ENCODE measurements at regions of chr2 and their contacts with region 1.

Region 1: GRCh38 chr2:205766779-205767359 is 84.6 kb downstream of the NRP2 start:
- DNase-seq: peak in 4 of 5 donors; percentile 35 to 60 (median 48)
- ATAC-seq: peak in 1 of 4 donors; percentile 49
- H3K4me3 ChIP-seq: no peak overlapping the region
- H3K27ac ChIP-seq: peak overlapping the region in 2 of 12 donors; percentile 58 to 85
- H3K4me1 ChIP-seq: peaks cover 0 to 32% (median 14%) of the 10 kb centered on the region in 12 donors
- H3K27me3 ChIP-seq: peaks cover 0 to 10% (median 2%) of the 10 kb centered on the region in 9 donors
- CTCF ChIP-seq: peak; percentile 78 to 90 (median 84)
- POLR2A ChIP-seq: no peak

Region 2: DNA sequence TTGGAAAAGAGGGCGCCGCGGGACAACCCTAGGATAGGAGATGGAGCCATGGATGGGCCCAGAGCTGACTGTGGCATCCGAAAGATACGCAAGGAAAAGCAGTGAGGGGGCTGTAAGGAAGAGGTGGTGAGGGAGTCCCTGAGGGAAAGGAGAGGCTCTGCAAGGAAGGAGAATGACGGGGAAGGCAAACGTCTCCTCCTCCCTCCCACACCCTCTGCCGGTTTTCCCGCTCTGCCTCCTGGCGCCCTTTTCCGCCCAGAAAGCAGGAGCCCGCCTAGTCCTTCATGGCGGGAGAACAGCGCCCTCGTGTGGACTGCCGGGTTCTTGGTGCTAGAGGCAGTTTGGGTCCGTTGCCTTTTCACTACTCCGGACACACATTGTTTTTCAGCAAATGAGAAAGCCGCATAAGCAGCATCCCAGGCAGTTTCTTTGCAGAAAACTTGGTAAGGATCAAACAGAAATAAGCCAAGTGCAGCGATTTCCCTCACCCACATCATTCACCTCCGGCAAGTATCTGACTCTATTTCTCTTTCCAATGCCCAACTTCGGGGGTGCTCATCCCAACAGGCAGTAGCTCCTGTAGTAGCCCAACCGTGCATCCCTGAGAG is 118.7 kb after region 1 on chr2:
- intact Hi-C with region 1: loop called in 7 of 10 experiments (anchors 2 to 5 kb)
- DNase-seq: peak; percentile 75 to 93 (median 86)
- ATAC-seq: peak; percentile 75 to 96 (median 88)
- H3K4me3 ChIP-seq: no peak overlapping the region
- H3K27ac ChIP-seq: peak overlapping the region in 1 of 12 donors; percentile 40
- H3K4me1 ChIP-seq: no peaks in the 10 kb centered on the region
- H3K27me3 ChIP-seq: no peaks in the 10 kb centered on the region
- CTCF ChIP-seq: peak; percentile 80 to 92 (median 85)
- POLR2A ChIP-seq: no peak

Region 3: GRCh38 chr2:205936446-205936845 is 169.6 kb after region 1 on chr2:
- intact Hi-C with region 1: no loop called
- DNase-seq: no peak
- ATAC-seq: no peak
- H3K4me3 ChIP-seq: no peak overlapping the region
- H3K27ac ChIP-seq: no peak overlapping the region
- H3K4me1 ChIP-seq: no peaks in the 10 kb centered on the region
- H3K27me3 ChIP-seq: no peaks in the 10 kb centered on the region
- CTCF ChIP-seq: no peak
- POLR2A ChIP-seq: no peak

Region 4: DNA sequence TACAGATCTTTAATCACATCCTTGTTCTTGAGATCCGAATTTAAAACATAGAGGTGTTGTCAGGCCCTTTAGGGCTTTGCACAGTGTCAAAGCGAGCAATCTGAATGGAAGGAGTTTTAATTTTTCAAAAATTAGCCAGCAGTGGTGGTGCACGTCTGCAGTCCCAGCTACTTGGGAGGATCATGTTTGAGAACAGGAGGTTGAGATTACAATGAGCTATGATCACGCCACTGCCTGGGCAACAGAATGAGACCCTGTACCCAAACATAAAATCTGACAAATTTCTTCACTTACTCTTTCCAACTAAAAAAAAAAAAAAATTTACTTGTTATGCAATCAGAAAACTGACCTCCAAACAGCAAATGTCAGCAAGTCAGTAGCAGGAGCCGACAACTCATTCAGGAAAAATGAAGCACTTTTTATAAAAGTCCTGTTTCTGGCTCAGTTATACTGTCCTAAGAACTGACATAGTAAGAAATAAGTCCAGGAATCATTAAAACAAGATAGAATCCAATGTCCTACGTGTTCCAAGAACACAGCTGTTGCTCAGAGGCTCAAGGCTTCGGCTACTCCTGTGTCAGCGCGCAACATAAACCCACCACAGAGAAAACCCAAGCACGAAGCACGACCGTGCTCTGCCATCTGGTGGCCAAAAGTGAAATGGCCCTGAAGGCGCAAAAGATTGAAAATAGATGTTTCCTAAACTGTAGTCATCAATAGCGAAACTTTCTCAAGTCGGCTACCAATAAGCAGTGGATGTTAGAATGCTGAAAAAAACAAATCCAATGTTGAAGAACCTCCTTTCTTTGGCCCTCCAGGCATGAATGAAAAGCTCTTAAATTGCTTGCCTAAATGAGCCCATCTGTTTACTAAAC is 181.0 kb after region 1 on chr2:
- intact Hi-C with region 1: loop called in 1 of 10 experiments (anchors 5 kb)
- DNase-seq: peak in 4 of 5 donors; percentile 57 to 73 (median 62)
- ATAC-seq: peak; percentile 87 to 91 (median 90)
- H3K4me3 ChIP-seq: no peak overlapping the region
- H3K27ac ChIP-seq: peak overlapping the region in 4 of 12 donors; percentile 1 to 46 (median 8)
- H3K4me1 ChIP-seq: peaks cover 0 to 22% (median 0%) of the 10 kb centered on the region in 12 donors
- H3K27me3 ChIP-seq: no peaks in the 10 kb centered on the region
- CTCF ChIP-seq: peak; percentile 85 to 97 (median 92)
- POLR2A ChIP-seq: no peak

Measured in heart left ventricle (tissue), 16 donors.